ENCODE measurements at regions of chr6 and their contacts with region 1.

Region 1: GRCh38 chr6:43769526-43770416 is at the start of gene VEGFA:
- DNase-seq: peak; percentile 87
- ATAC-seq: peak; percentile 60
- H3K4me3 ChIP-seq: peak within 1 kb of the TSS; percentile 98
- H3K27ac ChIP-seq: peak within 1 kb of the TSS; percentile 56
- H3K4me1 ChIP-seq: peaks cover 17% of the 10 kb centered on the region
- H3K27me3 ChIP-seq: no peaks in the 10 kb centered on the region
- CTCF ChIP-seq: peak; percentile 98
- total RNA-seq, gene VEGFA: 146 and 190 TPM in 2 replicates

Region 2: GRCh38 chr6:43629505-43630300 is 140.1 kb before region 1 on chr6:
- CTCF ChIA-PET with region 1: interaction called, 6 read pairs
- POLR2A ChIA-PET with region 1: interaction called, 11 read pairs
- intact Hi-C with region 1: no loop called
- DNase-seq: peak; percentile 98
- ATAC-seq: peak; percentile 75
- H3K4me3 ChIP-seq: peak overlapping the region; percentile 76
- H3K27ac ChIP-seq: peak overlapping the region; percentile 85
- H3K4me1 ChIP-seq: peaks cover 27% of the 10 kb centered on the region
- H3K27me3 ChIP-seq: no peaks in the 10 kb centered on the region
- CTCF ChIP-seq: no peak

Region 3: GRCh38 chr6:43702534-43703440 is 67.0 kb before region 1 on chr6:
- CTCF ChIA-PET with region 1: interaction called, 5 read pairs
- POLR2A ChIA-PET with region 1: interaction called, 10 read pairs
- intact Hi-C with region 1: no loop called
- DNase-seq: peak; percentile 93
- ATAC-seq: peak; percentile 60
- H3K4me3 ChIP-seq: peak overlapping the region; percentile 16; the same call in 1 of the 2 replicates
- H3K27ac ChIP-seq: peak overlapping the region; percentile 77
- H3K4me1 ChIP-seq: peaks cover 54% of the 10 kb centered on the region
- H3K27me3 ChIP-seq: no peaks in the 10 kb centered on the region
- CTCF ChIP-seq: no peak

Region 4: GRCh38 chr6:43796903-43797888 is 27.4 kb after region 1 on chr6:
- CTCF ChIA-PET with region 1: no interaction called
- POLR2A ChIA-PET with region 1: no interaction called
- intact Hi-C with region 1: loop called (anchors 2 kb)
- DNase-seq: peak; percentile 25
- ATAC-seq: no peak
- H3K4me3 ChIP-seq: no peak overlapping the region
- H3K27ac ChIP-seq: no peak overlapping the region
- H3K4me1 ChIP-seq: peaks cover 25% of the 10 kb centered on the region
- H3K27me3 ChIP-seq: no peaks in the 10 kb centered on the region
- CTCF ChIP-seq: peak; percentile 43; the same call in 1 of the 2 replicates

Region 5: GRCh38 chr6:43809417-43810291 is 39.9 kb after region 1 on chr6:
- CTCF ChIA-PET with region 1: no interaction called
- POLR2A ChIA-PET with region 1: no interaction called
- intact Hi-C with region 1: no loop called
- DNase-seq: peak; percentile 41
- ATAC-seq: 0 out of 2 replicates have a peak, but pooled peaks have one; percentile 38
- H3K4me3 ChIP-seq: no peak overlapping the region
- H3K27ac ChIP-seq: no peak overlapping the region
- H3K4me1 ChIP-seq: peaks cover 13% of the 10 kb centered on the region
- H3K27me3 ChIP-seq: no peaks in the 10 kb centered on the region
- CTCF ChIP-seq: no peak

Region 6: DNA sequence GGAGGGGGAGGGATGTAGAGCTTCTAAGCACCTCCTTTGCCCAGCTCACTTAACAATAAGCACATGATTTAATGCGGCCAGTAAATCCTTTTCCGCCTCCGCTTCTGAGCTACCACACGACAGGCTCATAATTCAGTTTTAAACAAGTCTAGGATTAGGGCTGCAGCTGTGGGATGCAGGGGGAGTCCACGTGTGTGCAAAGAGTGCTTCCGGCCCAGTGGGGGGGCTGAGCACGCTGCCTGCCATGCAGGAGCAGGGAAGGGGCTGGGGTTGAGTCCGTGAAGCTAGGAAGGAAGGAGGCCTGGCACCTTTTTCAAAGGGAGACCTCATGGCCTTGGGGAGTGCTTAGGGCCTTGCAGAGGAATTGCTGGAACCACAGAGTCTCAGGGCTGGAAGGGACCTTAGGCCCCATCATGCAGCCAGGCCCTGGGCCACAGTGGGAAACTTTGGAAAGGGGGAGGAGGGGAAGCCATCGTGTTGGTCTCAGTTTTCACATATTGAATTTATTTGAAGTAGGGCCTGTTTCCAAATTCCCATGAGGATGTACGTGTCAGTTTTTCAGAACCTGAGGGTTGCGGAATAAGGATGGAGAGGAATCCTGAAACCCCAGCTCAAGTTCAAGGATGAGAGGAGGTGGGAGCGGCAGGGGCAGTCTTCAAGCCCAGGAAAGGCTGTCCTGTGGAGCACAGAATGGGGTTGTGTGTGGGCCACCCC is 96.3 kb after region 1 on chr6:
- CTCF ChIA-PET with region 1: no interaction called
- POLR2A ChIA-PET with region 1: no interaction called
- intact Hi-C with region 1: no loop called
- DNase-seq: no peak
- ATAC-seq: no peak
- H3K4me3 ChIP-seq: no peak overlapping the region
- H3K27ac ChIP-seq: no peak overlapping the region
- H3K4me1 ChIP-seq: no peaks in the 10 kb centered on the region
- H3K27me3 ChIP-seq: no peaks in the 10 kb centered on the region
- CTCF ChIP-seq: no peak

Region 7: GRCh38 chr6:43937236-43938164 is 167.7 kb after region 1 on chr6:
- CTCF ChIA-PET with region 1: no interaction called
- POLR2A ChIA-PET with region 1: no interaction called
- intact Hi-C with region 1: no loop called
- DNase-seq: no peak
- ATAC-seq: no peak
- H3K4me3 ChIP-seq: no peak overlapping the region
- H3K27ac ChIP-seq: no peak overlapping the region
- H3K4me1 ChIP-seq: no peaks in the 10 kb centered on the region; the same call in 1 of the 2 replicates
- H3K27me3 ChIP-seq: no peaks in the 10 kb centered on the region
- CTCF ChIP-seq: no peak

Region 8: GRCh38 chr6:43951063-43951755 is 181.4 kb after region 1 on chr6:
- CTCF ChIA-PET with region 1: interaction called, 6 read pairs
- POLR2A ChIA-PET with region 1: no interaction called
- intact Hi-C with region 1: loop called (anchors 5 kb)
- DNase-seq: peak; percentile 29
- ATAC-seq: peak; percentile 72
- H3K4me3 ChIP-seq: no peak overlapping the region
- H3K27ac ChIP-seq: no peak overlapping the region
- H3K4me1 ChIP-seq: no peaks in the 10 kb centered on the region; the same call in 1 of the 2 replicates
- H3K27me3 ChIP-seq: no peaks in the 10 kb centered on the region
- CTCF ChIP-seq: peak; percentile 45